ENCODE measurements at regions of chr2 and their contacts with region 1.

Region 1: GRCh38 chr2:21228041-21228895 is 104.5 kb downstream of the TDRD15 start:
- DNase-seq: no peak
- H3K4me3 Mint-ChIP-seq: no peak overlapping the region
- H3K27ac Mint-ChIP-seq: no peak overlapping the region
- H3K4me1 Mint-ChIP-seq: no peaks in the 10 kb centered on the region
- H3K27me3 Mint-ChIP-seq: no peaks in the 10 kb centered on the region

Region 2: DNA sequence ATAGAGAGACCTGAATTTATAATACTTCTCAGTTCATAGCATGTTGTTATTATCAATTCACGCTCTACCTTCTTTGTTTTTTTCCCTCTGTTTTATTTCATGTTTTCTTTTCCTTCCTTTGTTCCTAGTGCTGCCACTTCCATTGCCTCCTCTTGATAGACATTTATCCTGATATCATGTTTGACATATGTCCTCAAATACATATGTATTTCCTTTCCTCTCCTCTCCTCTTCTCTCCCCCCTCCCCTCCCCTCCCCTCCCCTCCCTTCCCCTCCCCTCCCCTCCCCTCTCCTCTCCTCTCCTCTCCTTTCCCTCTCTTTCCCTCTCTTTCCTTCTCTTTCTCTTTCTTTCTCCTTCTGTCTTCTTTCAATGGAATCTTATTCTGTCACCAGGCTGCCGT is 36.7 kb before region 1 on chr2:
- intact Hi-C with region 1: loop called (anchors 2 kb)
- DNase-seq: no peak
- H3K4me3 Mint-ChIP-seq: no peak overlapping the region
- H3K27ac Mint-ChIP-seq: no peak overlapping the region
- H3K4me1 Mint-ChIP-seq: no peaks in the 10 kb centered on the region
- H3K27me3 Mint-ChIP-seq: no peaks in the 10 kb centered on the region

Region 3: GRCh38 chr2:21203976-21204375 is 24.3 kb before region 1 on chr2:
- intact Hi-C with region 1: no loop called
- DNase-seq: no peak
- H3K4me3 Mint-ChIP-seq: no peak overlapping the region
- H3K27ac Mint-ChIP-seq: no peak overlapping the region
- H3K4me1 Mint-ChIP-seq: no peaks in the 10 kb centered on the region
- H3K27me3 Mint-ChIP-seq: no peaks in the 10 kb centered on the region